OCI-LY7 (cell line): ENCODE measurements at regions of chr9 and their contacts with region 1.

Region 1: DNA sequence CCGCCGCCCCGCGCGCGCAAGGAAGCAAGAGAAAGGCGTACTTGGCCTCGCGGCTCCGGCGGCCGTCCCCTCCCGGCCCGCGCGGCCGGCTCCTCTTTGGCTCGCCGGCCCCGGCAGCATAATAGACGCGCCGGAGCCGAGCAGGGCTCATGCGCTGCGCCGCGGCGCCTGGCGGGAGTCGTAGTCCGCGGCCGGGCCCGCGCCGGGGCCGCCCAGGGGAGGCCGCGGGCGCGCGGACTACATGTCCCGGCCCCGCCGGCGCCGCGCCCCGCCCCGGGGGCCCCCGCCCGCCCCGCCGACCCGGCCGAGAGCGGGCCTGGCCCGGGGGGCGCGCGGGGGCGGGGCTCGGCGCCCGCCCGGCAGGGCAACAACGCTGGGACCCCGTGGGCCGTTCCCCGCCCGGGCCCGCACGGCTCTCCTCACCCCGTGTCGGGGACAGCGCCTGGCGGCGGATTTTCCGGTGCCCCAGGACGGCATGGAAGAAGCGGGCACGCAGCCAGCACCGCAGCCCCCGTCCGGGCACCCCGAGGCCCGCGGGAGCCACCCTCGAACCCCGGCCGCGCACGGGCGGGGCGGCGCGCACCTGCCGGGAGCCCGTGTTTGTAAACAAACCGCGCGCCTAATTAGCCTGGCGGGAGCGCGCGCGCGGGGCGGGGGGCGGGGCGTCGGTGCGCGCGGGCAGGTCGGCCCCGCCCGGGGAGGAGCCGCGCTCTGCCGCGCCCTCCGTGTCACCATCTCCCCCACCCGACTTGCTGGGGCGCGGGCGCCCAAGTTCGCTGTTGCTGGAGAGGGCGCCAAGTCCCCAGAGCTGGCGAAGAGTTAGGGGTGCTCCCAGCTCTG is at the start of gene BRD3:
- DNase-seq: peak; percentile 96
- H3K4me3 ChIP-seq: peak within 1 kb of the TSS; percentile 85
- H3K27ac ChIP-seq: peak within 1 kb of the TSS; percentile 67
- H3K4me1 ChIP-seq: peaks cover 21% of the 10 kb centered on the region
- CTCF ChIP-seq: no peak
- total RNA-seq, gene BRD3: 3.1 and 3.5 TPM in 2 replicates

Region 2: GRCh38 chr9:133742849-133743444 is 325.2 kb before region 1 on chr9:
- CTCF ChIA-PET with region 1: no interaction called
- POLR2A ChIA-PET with region 1: no interaction called
- intact Hi-C with region 1: no loop called
- DNase-seq: peak; percentile 84
- H3K4me3 ChIP-seq: no peak overlapping the region
- H3K27ac ChIP-seq: no peak overlapping the region
- H3K4me1 ChIP-seq: peaks cover 6% of the 10 kb centered on the region
- CTCF ChIP-seq: peak; percentile 98

Region 3: DNA sequence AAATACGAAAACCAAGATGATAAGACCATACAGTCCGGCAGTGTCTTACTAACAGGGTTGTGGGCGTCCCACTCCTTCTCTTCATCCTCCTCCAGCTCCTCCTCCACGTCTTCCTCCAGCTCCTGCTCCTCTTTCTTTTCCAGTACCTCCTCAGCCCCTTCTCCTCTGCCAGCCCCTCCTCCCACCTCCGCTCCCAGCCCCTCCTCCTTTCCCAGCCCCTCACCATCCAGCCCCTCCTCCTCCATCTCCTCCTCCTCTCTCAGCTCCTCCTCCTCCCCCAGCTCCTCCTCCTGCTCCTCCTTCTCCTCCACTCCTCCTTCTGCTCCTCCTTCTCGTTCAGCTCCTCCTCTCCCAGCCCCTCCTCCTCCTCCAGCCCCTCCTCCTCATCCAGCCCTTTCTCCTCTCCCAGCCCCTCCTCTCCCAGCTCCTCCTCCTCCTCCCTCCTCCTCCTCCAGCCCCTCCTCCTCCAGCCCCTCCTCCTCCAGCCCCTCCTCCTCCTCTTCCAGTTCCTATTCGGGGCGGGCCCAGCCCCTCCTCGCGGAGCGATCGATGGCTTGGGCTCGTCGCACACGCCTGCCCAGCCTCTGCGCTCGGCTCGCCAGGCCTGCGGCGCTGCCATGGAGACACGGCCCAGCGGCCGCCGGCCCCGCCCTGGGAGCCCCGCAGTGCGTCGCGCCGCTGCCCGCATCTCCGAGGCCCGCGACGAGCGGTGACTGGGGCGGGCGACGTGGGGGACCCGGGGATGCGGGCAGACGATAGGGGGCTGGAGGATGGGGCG is 43.1 kb before region 1 on chr9 and contains the start of gene BRD3OS:
- CTCF ChIA-PET with region 1: no interaction called
- POLR2A ChIA-PET with region 1: no interaction called
- intact Hi-C with region 1: loop called (anchors 5 kb)
- DNase-seq: peak; percentile 98
- H3K4me3 ChIP-seq: peak within 1 kb of the TSS; percentile 83
- H3K27ac ChIP-seq: peak within 1 kb of the TSS; percentile 54
- H3K4me1 ChIP-seq: peaks cover 12% of the 10 kb centered on the region
- CTCF ChIP-seq: no peak
- total RNA-seq, gene BRD3OS: 12.4 and 21.6 TPM in 2 replicates

Region 4: DNA sequence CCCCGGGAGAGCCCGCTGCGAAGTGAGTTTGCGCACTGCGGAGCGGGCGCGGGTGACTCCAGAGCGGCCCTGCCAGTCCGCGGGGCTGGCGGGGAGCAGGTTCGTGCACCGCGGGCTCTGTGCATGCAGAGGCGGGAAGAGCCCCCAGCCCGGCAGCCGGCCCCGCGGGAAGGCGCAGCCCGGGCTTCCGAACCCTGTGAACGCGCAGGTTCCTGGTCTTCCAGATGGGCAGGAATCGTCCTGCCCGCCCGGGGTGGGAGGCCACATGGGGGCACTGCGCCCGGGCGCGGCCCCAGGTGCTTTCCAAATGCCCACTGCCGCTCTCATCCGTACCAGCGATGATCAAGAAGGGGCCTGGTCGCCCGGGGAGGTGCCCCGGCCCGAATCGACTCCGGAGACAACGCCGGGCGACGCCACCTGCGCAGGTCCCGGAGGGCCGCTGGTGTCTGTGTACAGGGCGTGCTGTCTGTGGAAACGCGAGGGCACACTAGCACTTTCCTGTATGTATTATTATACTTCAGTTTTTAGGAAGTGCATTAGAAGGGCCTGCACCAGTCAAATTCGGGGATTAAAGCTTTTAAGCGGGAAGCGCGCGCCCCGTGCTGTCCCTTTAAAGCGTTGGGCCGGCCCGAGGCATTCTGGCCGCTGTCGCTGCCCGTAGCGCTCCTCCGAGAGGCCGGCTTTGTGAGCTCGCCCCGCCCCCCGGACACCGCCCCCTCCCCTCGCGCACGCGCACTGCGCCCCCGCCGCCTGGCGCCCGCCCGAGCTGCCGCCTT is 67.4 kb after region 1 on chr9 and contains the start of gene WDR5:
- CTCF ChIA-PET with region 1: no interaction called
- POLR2A ChIA-PET with region 1: no interaction called
- intact Hi-C with region 1: loop called (anchors 1 kb)
- DNase-seq: peak; percentile 94
- H3K4me3 ChIP-seq: peak within 1 kb of the TSS; percentile 100
- H3K27ac ChIP-seq: peak within 1 kb of the TSS; percentile 82
- H3K4me1 ChIP-seq: peaks cover 33% of the 10 kb centered on the region
- CTCF ChIP-seq: peak; percentile 52
- total RNA-seq, gene WDR5: 27.5 and 32.5 TPM in 2 replicates

Region 5: GRCh38 chr9:134163353-134164196 is 95.5 kb after region 1 on chr9:
- CTCF ChIA-PET with region 1: no interaction called
- POLR2A ChIA-PET with region 1: no interaction called
- intact Hi-C with region 1: loop called (anchors 1 kb)
- DNase-seq: no peak
- H3K4me3 ChIP-seq: peak overlapping the region; percentile 41
- H3K27ac ChIP-seq: no peak overlapping the region
- H3K4me1 ChIP-seq: peaks cover 16% of the 10 kb centered on the region
- CTCF ChIP-seq: no peak

Region 6: DNA sequence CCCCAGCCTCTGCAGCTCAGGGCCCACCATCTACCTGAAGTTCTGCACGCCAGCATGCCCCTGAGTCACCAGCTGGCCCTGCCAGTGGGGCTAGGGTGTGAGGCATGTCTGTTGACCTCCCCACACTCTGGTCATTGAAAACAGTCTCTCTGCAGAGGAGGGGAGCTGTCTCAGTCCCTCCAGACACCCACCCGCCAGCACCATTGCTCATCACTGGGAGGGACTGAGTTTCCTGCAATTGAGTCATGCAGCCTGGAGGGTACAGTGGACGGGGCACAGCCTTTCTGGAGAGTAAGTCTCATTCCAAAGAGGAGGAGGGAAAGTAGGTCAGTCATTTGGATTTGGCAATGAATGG is 556.7 kb after region 1 on chr9:
- CTCF ChIA-PET with region 1: no interaction called
- POLR2A ChIA-PET with region 1: no interaction called
- intact Hi-C with region 1: no loop called
- DNase-seq: no peak
- H3K4me3 ChIP-seq: no peak overlapping the region
- H3K27ac ChIP-seq: no peak overlapping the region
- H3K4me1 ChIP-seq: no peaks in the 10 kb centered on the region
- CTCF ChIP-seq: no peak

Region 7: DNA sequence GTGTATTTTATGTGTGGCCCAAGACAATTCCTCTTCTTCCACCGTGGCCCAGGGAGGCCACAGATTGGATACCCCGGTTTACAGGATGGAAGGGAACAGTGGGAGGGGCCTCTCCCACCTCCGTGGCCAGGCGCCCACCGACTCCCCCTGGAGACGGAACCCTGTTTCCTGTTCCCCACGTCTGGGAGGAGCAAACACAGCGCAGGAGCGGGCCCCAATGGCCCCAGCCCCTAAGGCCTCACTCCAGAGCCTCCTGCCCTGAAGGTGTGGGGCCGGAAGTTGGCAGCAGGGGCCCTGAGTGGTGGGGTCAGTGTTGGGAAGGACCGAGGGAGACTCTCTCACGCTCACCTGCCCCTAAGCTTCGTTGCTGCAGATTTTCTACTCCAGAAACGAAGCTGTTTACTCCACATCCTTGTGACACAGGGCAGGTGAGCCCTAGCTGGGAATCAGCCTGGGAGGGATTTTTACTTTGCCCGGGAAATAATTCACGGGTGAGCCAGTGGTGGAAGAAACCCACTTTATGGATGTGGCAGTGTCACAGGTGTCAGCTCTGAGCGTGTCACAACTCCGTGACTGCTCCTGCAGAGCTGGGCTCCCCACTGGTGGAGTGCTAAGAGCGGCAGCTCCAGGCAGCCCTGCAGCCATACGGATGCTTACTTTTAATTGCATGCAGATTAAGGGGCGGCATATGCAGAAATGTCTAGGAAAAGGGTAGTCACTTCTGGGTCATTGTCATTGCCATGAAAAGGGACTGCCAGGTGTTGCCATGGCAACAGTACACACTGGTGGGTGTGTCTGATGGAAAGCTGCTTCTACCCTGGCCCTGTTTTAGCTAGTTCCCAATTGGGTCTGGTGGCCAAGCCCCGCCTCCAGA is 941.8 kb after region 1 on chr9:
- CTCF ChIA-PET with region 1: no interaction called
- POLR2A ChIA-PET with region 1: no interaction called
- intact Hi-C with region 1: no loop called
- DNase-seq: no peak
- H3K4me3 ChIP-seq: no peak overlapping the region
- H3K27ac ChIP-seq: no peak overlapping the region
- H3K4me1 ChIP-seq: no peaks in the 10 kb centered on the region
- CTCF ChIP-seq: no peak